Panc1 (cell line): ENCODE measurements at regions of chr11 and their contacts with region 1.

Region 1: GRCh38 chr11:20127671-20128527 is 32.4 kb downstream of the DBX1 start:
- DNase-seq: no peak
- ATAC-seq: peak; percentile 88
- H3K4me3 ChIP-seq: no peak overlapping the region
- H3K27ac ChIP-seq: no peak overlapping the region
- H3K4me1 ChIP-seq: no peaks in the 10 kb centered on the region
- H3K27me3 ChIP-seq: no peaks in the 10 kb centered on the region
- CTCF ChIP-seq: peak; percentile 89

Region 2: DNA sequence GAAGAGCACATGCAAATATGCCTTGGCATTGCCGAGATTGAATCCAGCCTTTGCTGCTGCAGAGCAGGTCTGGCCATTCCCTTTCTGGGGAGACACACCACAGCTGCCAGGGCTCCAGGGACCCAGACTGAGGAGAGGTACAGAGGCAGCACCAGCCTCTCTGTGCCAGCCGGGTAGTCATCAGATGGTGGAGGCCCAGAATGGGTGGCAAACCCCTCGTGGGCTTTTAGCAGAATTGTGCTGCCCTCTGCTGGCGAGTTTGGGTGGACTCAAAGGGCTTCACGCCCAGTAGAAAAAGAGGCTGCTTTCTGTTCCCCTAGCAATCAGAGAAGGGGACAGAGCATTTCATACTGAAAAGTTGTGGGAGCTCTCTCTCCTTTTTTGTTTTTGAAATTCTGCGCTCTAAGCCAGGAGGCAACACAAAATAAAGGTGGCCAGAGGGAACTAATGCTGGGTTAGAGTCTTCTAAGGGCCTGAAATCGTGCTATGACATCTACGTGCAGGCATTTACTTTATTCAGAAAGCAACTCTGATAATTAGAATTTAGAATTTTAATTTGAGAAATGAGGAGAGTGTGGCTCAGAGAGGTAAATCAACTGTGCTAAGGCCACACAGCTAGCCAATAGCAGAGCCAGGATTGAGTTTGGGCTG is 574.1 kb before region 1 on chr11:
- CTCF ChIA-PET with region 1: no interaction called
- POLR2A ChIA-PET with region 1: no interaction called
- in situ Hi-C with region 1: no loop called
- intact Hi-C with region 1: loop called (anchors 10 kb)
- DNase-seq: peak; percentile 18
- ATAC-seq: peak; percentile 88
- H3K4me3 ChIP-seq: no peak overlapping the region
- H3K27ac ChIP-seq: no peak overlapping the region
- H3K4me1 ChIP-seq: no peaks in the 10 kb centered on the region
- H3K27me3 ChIP-seq: peaks cover 6% of the 10 kb centered on the region; the same call in 1 of the 2 replicates
- CTCF ChIP-seq: peak; percentile 88

Region 3: DNA sequence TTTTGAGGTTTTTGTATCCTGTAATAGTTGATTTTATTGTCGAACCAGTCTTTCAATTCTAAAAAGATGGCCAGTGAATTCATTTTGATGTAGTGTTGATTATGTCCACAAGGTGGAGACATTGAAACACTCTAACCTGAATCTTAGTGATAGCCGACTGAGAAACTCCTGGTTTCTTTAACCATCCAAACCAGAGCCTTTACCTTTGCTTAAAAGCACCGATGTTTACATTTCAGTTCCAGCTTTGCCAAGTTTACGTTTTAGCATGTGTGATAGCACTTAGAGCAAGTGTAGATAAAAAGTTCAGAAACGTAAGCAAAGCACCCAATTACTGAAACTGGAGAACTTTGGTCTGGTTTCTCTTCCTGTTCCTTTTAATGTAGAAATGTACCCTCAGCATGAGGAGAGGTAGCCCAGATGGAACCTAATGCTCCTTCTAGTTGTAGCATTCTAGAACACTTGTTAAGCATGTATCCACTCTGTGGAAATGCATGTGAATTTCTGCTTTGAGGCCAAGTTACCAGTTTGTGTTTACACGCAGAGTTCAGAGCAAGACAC is 176.3 kb before region 1 on chr11:
- CTCF ChIA-PET with region 1: no interaction called
- POLR2A ChIA-PET with region 1: no interaction called
- in situ Hi-C with region 1: no loop called
- intact Hi-C with region 1: loop called (anchors 2 kb)
- DNase-seq: peak; percentile 25
- ATAC-seq: peak; percentile 59
- H3K4me3 ChIP-seq: no peak overlapping the region
- H3K27ac ChIP-seq: 0 out of 2 replicates have a peak overlapping the region, but pooled peaks have one; percentile 29
- H3K4me1 ChIP-seq: peaks cover 4% of the 10 kb centered on the region
- H3K27me3 ChIP-seq: no peaks in the 10 kb centered on the region
- CTCF ChIP-seq: peak; percentile 73

Region 4: GRCh38 chr11:20013346-20014066 is 114.4 kb before region 1 on chr11:
- CTCF ChIA-PET with region 1: no interaction called
- POLR2A ChIA-PET with region 1: no interaction called
- in situ Hi-C with region 1: no loop called
- intact Hi-C with region 1: no loop called
- DNase-seq: no peak
- ATAC-seq: no peak
- H3K4me3 ChIP-seq: no peak overlapping the region
- H3K27ac ChIP-seq: no peak overlapping the region
- H3K4me1 ChIP-seq: no peaks in the 10 kb centered on the region
- H3K27me3 ChIP-seq: no peaks in the 10 kb centered on the region
- CTCF ChIP-seq: no peak

Region 5: DNA sequence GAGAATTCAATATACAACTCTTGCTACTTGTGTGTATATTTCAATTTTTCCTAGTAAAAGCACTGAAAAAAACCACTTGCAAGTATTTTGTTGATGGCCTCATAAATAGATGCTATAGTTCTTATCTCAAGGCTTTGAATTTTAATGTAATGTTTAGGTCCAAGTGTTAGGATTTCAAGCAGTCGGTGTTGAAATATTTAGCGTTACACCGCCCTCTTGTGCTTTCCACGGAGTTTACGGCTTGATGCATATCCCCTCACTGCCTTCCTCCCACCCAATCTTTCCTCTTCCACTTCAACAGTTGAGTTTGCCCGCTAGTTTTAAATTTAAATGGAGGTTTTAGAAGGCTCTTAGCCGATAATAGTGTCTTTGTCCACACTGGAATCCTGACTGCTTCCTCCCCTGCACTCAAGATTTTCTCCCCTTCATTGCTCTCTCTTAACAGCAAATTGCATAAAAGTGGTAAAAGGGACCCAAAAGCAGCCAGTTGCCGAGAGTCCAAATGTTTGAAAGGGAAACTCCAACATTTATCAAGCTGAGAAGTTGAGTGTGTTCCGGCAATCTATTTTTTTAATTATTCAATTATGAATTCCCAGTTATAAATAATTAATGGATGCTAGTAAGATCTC is 209.7 kb after region 1 on chr11:
- CTCF ChIA-PET with region 1: no interaction called
- POLR2A ChIA-PET with region 1: no interaction called
- in situ Hi-C with region 1: no loop called
- intact Hi-C with region 1: loop called (anchors 1 kb)
- DNase-seq: no peak
- ATAC-seq: peak; percentile 85; the same call in 1 of the 2 replicates
- H3K4me3 ChIP-seq: no peak overlapping the region
- H3K27ac ChIP-seq: no peak overlapping the region
- H3K4me1 ChIP-seq: no peaks in the 10 kb centered on the region
- H3K27me3 ChIP-seq: peaks cover 32% of the 10 kb centered on the region
- CTCF ChIP-seq: peak; percentile 69

Region 6: GRCh38 chr11:20355221-20356219 is 227.6 kb after region 1 on chr11:
- CTCF ChIA-PET with region 1: interaction called, 19 read pairs
- POLR2A ChIA-PET with region 1: interaction called, 6 read pairs
- in situ Hi-C with region 1: no loop called
- intact Hi-C with region 1: loop called (anchors 1 kb)
- DNase-seq: no peak
- ATAC-seq: peak; percentile 90
- H3K4me3 ChIP-seq: no peak overlapping the region
- H3K27ac ChIP-seq: no peak overlapping the region
- H3K4me1 ChIP-seq: peaks cover under 1% of the 10 kb centered on the region
- H3K27me3 ChIP-seq: no peaks in the 10 kb centered on the region
- CTCF ChIP-seq: peak; percentile 74

Region 7: GRCh38 chr11:20609727-20610707 is 482.1 kb after region 1 on chr11:
- CTCF ChIA-PET with region 1: no interaction called
- POLR2A ChIA-PET with region 1: no interaction called
- in situ Hi-C with region 1: no loop called
- intact Hi-C with region 1: loop called (anchors 5 kb)
- DNase-seq: peak; percentile 39
- ATAC-seq: peak; percentile 98
- H3K4me3 ChIP-seq: peak overlapping the region; percentile 18 to 44; a peak in 3 of 4 replicates
- H3K27ac ChIP-seq: no peak overlapping the region
- H3K4me1 ChIP-seq: no peaks in the 10 kb centered on the region
- H3K27me3 ChIP-seq: peaks cover 19% of the 10 kb centered on the region
- CTCF ChIP-seq: peak; percentile 97